HepG2 (cell line): ENCODE measurements at regions of chr19 and their contacts with region 1.

Region 1: DNA sequence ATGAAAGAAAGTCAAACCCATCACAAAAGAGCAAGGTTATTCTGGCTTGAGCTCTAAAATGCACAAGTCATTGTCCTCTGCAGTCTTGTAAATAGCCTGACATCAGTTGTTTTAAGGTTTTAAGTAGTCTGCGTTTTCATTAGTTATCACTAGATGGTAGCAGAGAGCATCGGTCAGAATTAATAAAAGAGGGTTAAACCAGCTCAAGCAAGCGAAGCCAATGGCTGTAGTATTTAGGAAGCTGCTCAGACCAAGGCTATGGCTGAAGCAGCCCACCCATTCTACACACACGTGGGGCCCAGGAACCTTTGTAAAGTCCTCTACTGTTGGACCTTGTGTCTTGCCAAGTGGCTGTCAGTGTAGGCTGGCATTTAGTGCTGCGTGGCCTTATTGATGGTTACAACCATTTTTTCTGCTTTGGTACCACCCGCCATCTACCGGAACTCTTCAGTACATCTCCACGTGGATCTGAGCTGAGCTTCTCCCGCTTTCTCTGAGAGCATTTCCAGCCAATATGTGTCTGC is 13.3 kb upstream of the ZNF57 start:
- DNase-seq: peak; percentile 76
- ATAC-seq: peak; percentile 69
- H3K4me3 ChIP-seq: no peak overlapping the region; a peak in 1 of 6 replicates
- H3K27ac ChIP-seq: no peak overlapping the region
- H3K4me1 ChIP-seq: peaks cover 14% of the 10 kb centered on the region
- H3K27me3 ChIP-seq: no peaks in the 10 kb centered on the region
- CTCF ChIP-seq: peak; percentile 72
- EP300 ChIP-seq: no peak
- POLR2A ChIP-seq: no peak
- RAD21 ChIP-seq: peak; percentile 52

Region 2: DNA sequence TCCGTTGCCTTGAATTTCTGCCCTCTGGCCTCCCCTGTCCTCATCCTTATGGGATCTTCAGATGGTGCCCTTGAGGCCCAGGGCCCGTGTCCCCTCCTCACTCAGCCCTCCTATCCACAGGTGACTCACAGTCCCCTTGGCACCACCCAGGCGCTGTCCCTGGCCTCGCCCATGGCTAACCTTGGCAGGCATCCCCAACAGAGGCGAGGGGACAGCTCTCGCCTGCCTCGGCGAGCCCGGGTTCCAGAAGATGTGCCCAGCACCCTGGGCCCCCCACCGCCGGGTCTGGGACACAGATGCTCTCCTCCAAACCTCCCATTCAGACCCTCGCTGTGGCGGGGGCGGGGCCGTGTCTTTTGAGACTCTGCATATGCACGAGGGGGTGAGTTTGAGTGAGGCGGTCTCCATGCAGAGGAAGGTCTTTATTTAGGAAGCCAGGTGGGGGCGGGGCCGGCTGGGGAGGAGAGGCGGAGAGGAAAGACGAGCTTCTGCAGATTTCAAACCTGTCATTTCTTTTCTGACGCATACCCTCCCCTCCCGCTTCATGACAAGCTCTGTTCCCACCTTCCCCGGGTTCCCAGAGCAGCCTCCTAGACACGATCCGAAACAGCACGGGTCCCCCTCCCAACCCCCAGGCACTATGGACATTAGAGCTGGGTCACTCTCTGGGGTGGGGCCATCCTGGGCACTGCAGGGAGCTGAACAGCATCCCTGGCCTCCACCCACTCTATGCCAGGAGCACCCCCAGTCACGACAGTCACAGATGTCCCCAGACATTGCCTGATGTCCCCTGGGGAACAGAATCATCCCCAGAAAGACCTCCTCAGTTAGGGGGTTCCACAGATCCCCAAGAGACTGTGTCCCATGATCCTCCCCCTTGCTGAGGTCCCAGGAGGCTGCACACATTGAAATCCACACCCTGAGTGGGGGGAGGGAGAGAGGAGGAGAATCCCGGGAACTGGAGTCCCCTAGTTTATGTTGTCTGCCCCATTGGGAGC is 233.4 kb before region 1 on chr19:
- CTCF ChIA-PET with region 1: interaction called, 4 read pairs
- POLR2A ChIA-PET with region 1: no interaction called
- in situ Hi-C with region 1: loop called (anchors 10 kb)
- intact Hi-C with region 1: no loop called
- DNase-seq: no peak
- ATAC-seq: peak; percentile 11; the same call in 1 of the 3 replicates
- H3K4me3 ChIP-seq: peak overlapping the region in 1 of 3 experiments; percentile 30; a peak in 1 of 6 replicates
- H3K27ac ChIP-seq: no peak overlapping the region
- H3K4me1 ChIP-seq: peaks cover 29% of the 10 kb centered on the region
- H3K27me3 ChIP-seq: no peaks in the 10 kb centered on the region
- CTCF ChIP-seq: no peak
- EP300 ChIP-seq: no peak
- POLR2A ChIP-seq: no peak
- RAD21 ChIP-seq: no peak

Region 3: DNA sequence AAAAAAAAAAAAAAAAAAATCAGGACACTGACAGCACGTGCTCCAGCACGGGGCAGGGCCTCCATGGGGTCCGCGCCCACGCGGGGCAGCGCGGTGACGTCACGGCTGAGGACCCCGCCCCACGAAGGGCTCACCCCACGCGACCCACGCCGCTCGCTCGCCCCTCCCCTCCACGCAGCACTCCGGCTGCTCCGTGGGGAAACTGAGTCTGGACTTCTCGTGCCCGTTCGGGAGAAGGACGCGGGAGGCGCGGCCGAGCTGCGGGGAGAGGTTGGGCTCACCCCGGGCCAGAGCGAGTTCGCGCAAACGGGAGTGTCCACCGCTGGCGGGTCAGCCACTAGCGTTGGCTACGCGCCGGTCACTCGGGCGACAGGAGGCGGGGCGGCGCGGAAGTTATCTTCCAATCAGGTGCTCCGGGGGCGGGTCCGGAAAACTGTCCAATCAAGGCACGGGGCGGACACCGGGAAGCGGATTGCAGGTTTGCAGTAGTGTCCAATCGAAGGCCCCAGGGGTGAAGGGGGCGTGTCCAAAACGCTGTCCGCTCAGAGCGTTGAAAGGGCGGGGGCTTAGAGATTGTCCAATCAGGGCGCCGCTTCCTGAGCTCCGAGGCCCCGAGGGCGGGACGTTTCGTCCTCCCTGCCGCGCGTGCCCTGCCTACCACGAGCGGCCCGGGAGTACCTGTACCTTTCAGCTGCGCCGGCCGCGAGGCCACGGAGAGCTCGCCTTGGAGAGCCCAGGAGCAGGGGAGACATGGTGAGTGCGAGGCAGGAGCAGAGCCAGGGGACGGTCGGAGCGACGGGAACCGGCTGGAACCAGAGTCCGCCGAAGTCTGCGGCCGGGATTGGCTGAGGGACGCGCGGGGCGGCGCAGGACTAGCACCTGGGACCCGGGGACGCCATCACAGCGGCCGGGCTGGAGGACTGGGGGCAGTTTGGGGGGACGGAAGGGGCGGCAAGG is 13.1 kb after region 1 on chr19 and contains the start of gene ZNF57:
- CTCF ChIA-PET with region 1: no interaction called
- POLR2A ChIA-PET with region 1: interaction called, 20 read pairs
- in situ Hi-C with region 1: no loop called
- intact Hi-C with region 1: no loop called
- DNase-seq: peak; percentile 98
- ATAC-seq: peak; percentile 87
- H3K4me3 ChIP-seq: peak within 1 kb of the TSS; percentile 86 to 98 (median 91)
- H3K27ac ChIP-seq: peak within 1 kb of the TSS; percentile 88
- H3K4me1 ChIP-seq: peaks cover 49% of the 10 kb centered on the region
- H3K27me3 ChIP-seq: no peaks in the 10 kb centered on the region
- CTCF ChIP-seq: 0 out of 2 replicates have a peak, but pooled peaks have one; percentile 4
- EP300 ChIP-seq: no peak
- POLR2A ChIP-seq: peak; percentile 67 to 86
- RAD21 ChIP-seq: peak; percentile 66
- total RNA-seq, gene ZNF57: 17.5 and 25.8 TPM in 2 replicates

Region 4: DNA sequence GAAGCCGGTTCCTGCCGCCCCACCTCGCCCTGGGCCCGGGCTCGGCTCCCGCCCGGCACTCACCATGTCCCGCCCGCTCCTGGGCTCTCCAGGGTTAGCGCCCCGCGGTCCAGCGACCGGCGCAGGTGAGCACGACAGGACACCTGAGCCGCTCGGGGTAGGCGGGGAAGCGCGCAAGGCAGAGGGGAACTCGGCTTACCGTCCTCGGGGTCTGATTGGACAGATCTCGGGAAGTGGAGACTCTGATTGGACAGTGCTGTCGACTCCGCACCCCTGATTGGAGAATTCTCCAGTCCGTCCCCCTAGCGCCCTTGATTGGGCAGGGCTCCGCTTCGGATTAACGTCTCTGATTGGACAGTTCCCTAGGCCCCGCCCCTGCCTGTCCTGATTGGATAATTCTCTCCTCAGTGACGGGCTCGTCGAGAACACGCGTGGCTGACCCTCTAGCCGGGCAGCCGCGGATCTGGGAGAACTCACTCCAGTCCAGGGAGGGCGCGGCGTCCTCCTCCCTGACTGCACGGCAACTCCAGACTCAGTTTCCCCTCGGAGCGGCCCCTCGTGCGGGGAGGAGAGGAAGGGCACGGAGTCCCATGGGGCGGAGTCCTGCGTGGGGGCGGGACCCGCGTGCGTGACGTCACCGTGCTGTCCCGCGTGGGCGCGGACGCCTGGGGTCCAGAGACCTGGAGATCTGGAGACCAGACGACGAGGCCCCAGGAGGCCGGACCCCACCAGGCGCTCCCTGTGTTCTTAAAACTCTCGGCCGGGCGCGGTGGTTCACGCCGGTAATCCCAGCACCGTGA is 57.5 kb after region 1 on chr19 and contains the start of gene ZNF77:
- CTCF ChIA-PET with region 1: interaction called, 7 read pairs
- POLR2A ChIA-PET with region 1: interaction called, 10 read pairs
- in situ Hi-C with region 1: no loop called
- intact Hi-C with region 1: loop called (anchors 1 kb)
- DNase-seq: peak; percentile 99
- ATAC-seq: peak; percentile 97
- H3K4me3 ChIP-seq: peak within 1 kb of the TSS; percentile 84 to 90 (median 88)
- H3K27ac ChIP-seq: peak within 1 kb of the TSS; percentile 86
- H3K4me1 ChIP-seq: peaks cover 30% of the 10 kb centered on the region
- H3K27me3 ChIP-seq: no peaks in the 10 kb centered on the region; a peak in 1 of 5 replicates
- CTCF ChIP-seq: 0 out of 2 replicates have a peak, but pooled peaks have one; percentile 13
- EP300 ChIP-seq: no peak
- POLR2A ChIP-seq: peak; percentile 64 to 89; a peak in 3 of 4 replicates
- RAD21 ChIP-seq: 0 out of 2 replicates have a peak, but pooled peaks have one; percentile 34
- total RNA-seq, gene ZNF77: 11.5 and 12.6 TPM in 2 replicates

Region 5: GRCh38 chr19:2962045-2962561 is 74.7 kb after region 1 on chr19:
- CTCF ChIA-PET with region 1: no interaction called
- POLR2A ChIA-PET with region 1: no interaction called
- in situ Hi-C with region 1: no loop called
- intact Hi-C with region 1: no loop called
- DNase-seq: peak; percentile 70
- ATAC-seq: peak; percentile 63
- H3K4me3 ChIP-seq: 0 out of 6 replicates have a peak overlapping the region, but pooled peaks of 1 of the 3 experiments have one; percentile 10
- H3K27ac ChIP-seq: no peak overlapping the region
- H3K4me1 ChIP-seq: no peaks in the 10 kb centered on the region
- H3K27me3 ChIP-seq: no peaks in the 10 kb centered on the region
- CTCF ChIP-seq: peak; percentile 91
- EP300 ChIP-seq: no peak
- POLR2A ChIP-seq: no peak
- RAD21 ChIP-seq: peak; percentile 73; the same call in 1 of the 2 replicates

Region 6: GRCh38 chr19:3224346-3225168 is 337.1 kb after region 1 on chr19 and contains the start of gene CELF5:
- CTCF ChIA-PET with region 1: no interaction called
- POLR2A ChIA-PET with region 1: no interaction called
- in situ Hi-C with region 1: no loop called
- intact Hi-C with region 1: no loop called
- DNase-seq: no peak
- ATAC-seq: peak; percentile 45
- H3K4me3 ChIP-seq: peak within 1 kb of the TSS in 1 of 3 experiments; percentile 50; a peak in 1 of 6 replicates
- H3K27ac ChIP-seq: no peak within 1 kb of the TSS
- H3K4me1 ChIP-seq: no peaks in the 10 kb centered on the region
- H3K27me3 ChIP-seq: peaks cover 2 to 34% of the 10 kb centered on the region in 2 experiments; a peak in 4 of 5 replicates
- CTCF ChIP-seq: peak; percentile 10; the same call in 1 of the 2 replicates
- EP300 ChIP-seq: no peak
- POLR2A ChIP-seq: no peak
- RAD21 ChIP-seq: peak; percentile 38; the same call in 1 of the 2 replicates
- total RNA-seq, gene CELF5: 0.14 and 0.31 TPM in 2 replicates